ENCODE measurements at regions of chrX and their contacts with region 1.

Region 1: GRCh38 chrX:148380650-148381561 is 119.5 kb upstream of the AFF2 start:
- DNase-seq: peak; percentile 66
- ATAC-seq: peak; percentile 96
- H3K4me3 Mint-ChIP-seq: peak overlapping the region; percentile 62
- H3K27ac Mint-ChIP-seq: peak overlapping the region; percentile 93
- H3K4me1 Mint-ChIP-seq: peaks cover 32% of the 10 kb centered on the region
- H3K27me3 Mint-ChIP-seq: no peaks in the 10 kb centered on the region

Region 2: DNA sequence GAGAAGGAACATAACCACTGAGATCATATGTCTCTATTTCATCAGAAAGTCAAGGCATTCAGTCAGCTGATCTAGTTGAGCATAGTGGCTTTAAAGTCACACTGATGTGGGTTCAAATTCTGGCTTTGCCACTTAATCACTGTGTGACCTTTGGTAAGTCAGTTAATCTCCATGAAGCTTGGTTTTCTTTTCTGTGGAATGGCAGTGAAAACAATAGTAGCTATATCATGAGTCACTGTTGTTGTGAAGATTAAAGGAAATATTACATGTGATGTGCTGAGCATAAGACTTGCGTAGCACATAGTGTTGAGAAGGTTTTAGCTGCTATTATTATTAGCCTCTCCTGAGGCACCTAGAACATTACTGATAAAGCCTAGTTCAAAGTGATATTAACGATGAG is 157.5 kb before region 1 on chrX:
- CTCF ChIA-PET with region 1: no interaction called
- POLR2A ChIA-PET with region 1: no interaction called
- intact Hi-C with region 1: no loop called
- DNase-seq: no peak
- ATAC-seq: no peak
- H3K4me3 Mint-ChIP-seq: no peak overlapping the region
- H3K27ac Mint-ChIP-seq: no peak overlapping the region
- H3K4me1 Mint-ChIP-seq: peaks cover 6% of the 10 kb centered on the region
- H3K27me3 Mint-ChIP-seq: no peaks in the 10 kb centered on the region

Region 3: GRCh38 chrX:148282504-148282903 is 98.4 kb before region 1 on chrX:
- CTCF ChIA-PET with region 1: no interaction called
- POLR2A ChIA-PET with region 1: no interaction called
- intact Hi-C with region 1: loop called in 1 of 2 experiments (anchors 1 kb)
- DNase-seq: no peak
- ATAC-seq: peak; percentile 65
- H3K4me3 Mint-ChIP-seq: no peak overlapping the region
- H3K27ac Mint-ChIP-seq: peak overlapping the region; percentile 37
- H3K4me1 Mint-ChIP-seq: peaks cover 31% of the 10 kb centered on the region
- H3K27me3 Mint-ChIP-seq: no peaks in the 10 kb centered on the region

Region 4: GRCh38 chrX:148363471-148364235 is 17.3 kb before region 1 on chrX:
- CTCF ChIA-PET with region 1: no interaction called
- POLR2A ChIA-PET with region 1: no interaction called
- intact Hi-C with region 1: no loop called
- DNase-seq: no peak
- ATAC-seq: no peak
- H3K4me3 Mint-ChIP-seq: no peak overlapping the region
- H3K27ac Mint-ChIP-seq: no peak overlapping the region
- H3K4me1 Mint-ChIP-seq: peaks cover 5% of the 10 kb centered on the region
- H3K27me3 Mint-ChIP-seq: no peaks in the 10 kb centered on the region

Region 5: DNA sequence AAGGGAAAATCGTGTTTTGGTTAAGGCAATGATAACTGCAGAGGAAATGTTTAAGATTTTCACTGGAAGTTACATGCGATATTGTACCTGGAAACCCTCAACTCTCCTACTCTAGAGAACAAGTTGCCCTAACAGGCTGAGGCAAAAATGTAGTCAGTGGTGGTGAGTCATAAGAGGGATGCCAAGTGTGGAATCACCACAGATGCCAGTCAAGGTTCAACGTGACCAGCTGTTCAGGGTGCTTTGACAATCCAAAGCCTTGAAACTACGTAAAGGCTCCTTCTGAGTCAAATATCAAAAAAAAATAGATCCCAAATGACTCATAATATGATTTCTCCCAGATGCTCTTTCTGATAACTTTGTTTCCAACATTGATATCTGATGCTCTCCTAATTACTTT is 41.6 kb after region 1 on chrX:
- CTCF ChIA-PET with region 1: no interaction called
- POLR2A ChIA-PET with region 1: no interaction called
- intact Hi-C with region 1: loop called in 1 of 2 experiments (anchors 5 kb)
- DNase-seq: peak; percentile 7
- ATAC-seq: no peak
- H3K4me3 Mint-ChIP-seq: no peak overlapping the region
- H3K27ac Mint-ChIP-seq: no peak overlapping the region
- H3K4me1 Mint-ChIP-seq: peaks cover 11% of the 10 kb centered on the region
- H3K27me3 Mint-ChIP-seq: no peaks in the 10 kb centered on the region

Measured in activated CD4-positive, alpha-beta T cell treated with anti-CD3 and anti-CD28 coated beads for 36 hours (primary cell).